Left ventricle myocardium inferior (tissue), 1 donor: ENCODE measurements at regions of chr12 and their contacts with region 1.

Region 1: DNA sequence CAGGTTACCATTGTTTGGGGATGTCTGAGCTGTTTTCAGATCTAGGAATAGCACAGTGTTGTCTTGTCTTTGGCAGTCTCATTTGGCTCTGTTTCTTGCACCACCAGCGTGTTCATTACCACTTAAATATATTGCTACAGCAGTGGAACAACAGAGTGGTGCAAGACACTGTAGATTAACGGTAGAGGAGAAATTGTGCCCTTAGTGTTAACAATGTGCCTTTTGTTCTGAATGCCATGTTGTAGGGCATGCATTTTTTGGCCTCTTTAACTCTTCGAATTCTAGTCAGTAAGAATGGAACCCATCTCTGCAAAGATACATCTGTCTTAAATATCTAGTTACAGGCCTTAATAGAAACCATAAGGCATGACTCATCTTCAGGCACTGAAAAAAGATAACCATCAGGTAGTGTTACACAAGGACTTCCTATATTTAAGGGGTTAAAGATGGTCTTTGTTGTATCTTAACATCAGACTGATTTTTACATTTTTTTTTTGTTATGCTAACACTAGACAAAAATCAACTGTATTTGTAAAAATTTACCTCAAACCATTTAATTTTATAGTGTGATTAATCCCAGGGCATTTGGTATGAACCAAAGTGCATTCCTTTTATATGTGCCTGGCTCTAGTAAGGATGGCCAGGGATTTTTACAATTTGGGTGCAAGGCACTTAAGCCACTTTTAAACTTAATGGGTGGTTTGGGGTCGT is 12.9 kb downstream of the DYRK2 start:
- DNase-seq: no peak
- H3K4me3 ChIP-seq: no peak overlapping the region
- H3K27ac ChIP-seq: peak overlapping the region; percentile 43
- H3K4me1 ChIP-seq: peaks cover 100% of the 10 kb centered on the region
- H3K27me3 ChIP-seq: no peaks in the 10 kb centered on the region
- CTCF ChIP-seq: no peak

Region 2: GRCh38 chr12:67797185-67797741 is 135.8 kb after region 1 on chr12:
- intact Hi-C with region 1: loop called (anchors 10 kb)
- DNase-seq: no peak
- H3K4me3 ChIP-seq: peak overlapping the region; percentile 16
- H3K27ac ChIP-seq: peak overlapping the region; percentile 62
- H3K4me1 ChIP-seq: peaks cover 30% of the 10 kb centered on the region
- H3K27me3 ChIP-seq: no peaks in the 10 kb centered on the region
- CTCF ChIP-seq: no peak